GM12878 (cell line): ENCODE measurements at regions of chr2 and their contacts with region 1.

Region 1: DNA sequence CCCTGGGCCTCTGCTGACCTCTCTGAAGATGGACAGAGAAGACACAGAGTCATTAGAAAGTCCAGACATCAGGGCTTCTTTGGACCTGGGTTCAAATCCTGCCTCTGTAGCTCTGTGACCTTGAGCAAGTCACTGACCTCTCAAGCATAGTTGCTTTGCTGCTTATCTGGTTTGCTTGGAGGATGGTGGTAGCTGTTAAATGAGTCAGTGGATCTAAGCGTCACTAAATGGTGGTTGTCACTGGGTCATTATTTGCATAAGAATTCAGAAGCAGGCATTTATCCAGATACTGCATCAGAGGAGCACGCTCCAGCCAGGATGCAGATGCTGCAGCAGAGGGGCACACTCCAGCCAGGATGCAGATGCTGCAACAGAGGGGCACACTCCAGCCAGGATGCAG is 229.2 kb downstream of the GLI2 start:
- DNase-seq: no peak
- ATAC-seq: no peak
- H3K4me3 ChIP-seq: no peak overlapping the region
- H3K27ac ChIP-seq: no peak overlapping the region
- H3K4me1 ChIP-seq: no peaks in the 10 kb centered on the region
- H3K27me3 ChIP-seq: no peaks in the 10 kb centered on the region; a peak in 2 of 4 replicates
- CTCF ChIP-seq: no peak
- EP300 ChIP-seq: no peak
- POLR2A ChIP-seq: no peak
- RAD21 ChIP-seq: no peak

Region 2: GRCh38 chr2:120914839-120915521 is 49.8 kb before region 1 on chr2:
- CTCF ChIA-PET with region 1: no interaction called
- POLR2A ChIA-PET with region 1: no interaction called
- RAD21 ChIA-PET with region 1: no interaction called
- SMC1A ChIA-PET with region 1: no interaction called
- in situ Hi-C with region 1: loop called (anchors 5 kb)
- intact Hi-C with region 1: no loop called
- DNase-seq: no peak
- ATAC-seq: no peak
- H3K4me3 ChIP-seq: no peak overlapping the region
- H3K27ac ChIP-seq: no peak overlapping the region
- H3K4me1 ChIP-seq: no peaks in the 10 kb centered on the region
- H3K27me3 ChIP-seq: peaks cover 0 to 4% of the 10 kb centered on the region in 2 experiments; a peak in 3 of 4 replicates
- CTCF ChIP-seq: no peak
- EP300 ChIP-seq: no peak
- POLR2A ChIP-seq: no peak
- RAD21 ChIP-seq: no peak

Region 3: DNA sequence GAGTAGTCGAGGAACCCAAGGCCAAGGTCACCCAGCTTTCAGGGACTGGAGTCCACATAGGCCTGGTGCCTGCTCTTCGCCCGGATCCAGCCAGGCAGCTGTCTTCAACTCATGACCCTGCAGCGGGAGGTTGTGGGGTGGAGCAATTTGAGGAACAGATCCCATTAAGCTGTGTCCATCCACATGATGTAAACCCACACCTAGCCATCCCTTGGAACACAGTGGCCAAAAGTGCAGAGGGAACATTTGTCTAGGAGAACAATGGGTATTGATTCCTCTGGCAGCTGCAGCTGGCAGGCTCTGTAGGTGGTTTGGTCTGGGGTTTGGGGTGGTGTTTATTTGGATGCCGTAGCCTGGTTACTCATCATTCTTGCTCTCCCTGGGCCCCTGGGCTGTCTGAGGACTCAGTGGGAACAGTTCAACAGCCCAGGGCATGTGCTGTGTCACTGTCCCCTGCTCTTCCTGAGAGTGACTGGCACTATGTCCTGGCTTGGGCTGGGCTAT is 220.8 kb after region 1 on chr2:
- CTCF ChIA-PET with region 1: no interaction called
- POLR2A ChIA-PET with region 1: no interaction called
- RAD21 ChIA-PET with region 1: no interaction called
- SMC1A ChIA-PET with region 1: no interaction called
- in situ Hi-C with region 1: no loop called
- intact Hi-C with region 1: no loop called
- DNase-seq: no peak
- ATAC-seq: no peak
- H3K4me3 ChIP-seq: no peak overlapping the region
- H3K27ac ChIP-seq: no peak overlapping the region
- H3K4me1 ChIP-seq: no peaks in the 10 kb centered on the region
- H3K27me3 ChIP-seq: no peaks in the 10 kb centered on the region
- CTCF ChIP-seq: no peak
- EP300 ChIP-seq: no peak
- POLR2A ChIP-seq: no peak
- RAD21 ChIP-seq: no peak